Common myeloid progenitor, CD34-positive (primary cell): ENCODE measurements at regions of chr4 and their contacts with region 1.

Region 1: GRCh38 chr4:74675673-74676279 is 118.5 kb downstream of the BTC start:
- DNase-seq: peak; percentile 65 to 77 (median 75)
- H3K4me3 ChIP-seq: no peak overlapping the region
- H3K27ac ChIP-seq: no peak overlapping the region
- H3K4me1 ChIP-seq: peaks cover 0 to 8% (median 4%) of the 10 kb centered on the region in 4 experiments
- H3K27me3 ChIP-seq: no peaks in the 10 kb centered on the region

Region 2: DNA sequence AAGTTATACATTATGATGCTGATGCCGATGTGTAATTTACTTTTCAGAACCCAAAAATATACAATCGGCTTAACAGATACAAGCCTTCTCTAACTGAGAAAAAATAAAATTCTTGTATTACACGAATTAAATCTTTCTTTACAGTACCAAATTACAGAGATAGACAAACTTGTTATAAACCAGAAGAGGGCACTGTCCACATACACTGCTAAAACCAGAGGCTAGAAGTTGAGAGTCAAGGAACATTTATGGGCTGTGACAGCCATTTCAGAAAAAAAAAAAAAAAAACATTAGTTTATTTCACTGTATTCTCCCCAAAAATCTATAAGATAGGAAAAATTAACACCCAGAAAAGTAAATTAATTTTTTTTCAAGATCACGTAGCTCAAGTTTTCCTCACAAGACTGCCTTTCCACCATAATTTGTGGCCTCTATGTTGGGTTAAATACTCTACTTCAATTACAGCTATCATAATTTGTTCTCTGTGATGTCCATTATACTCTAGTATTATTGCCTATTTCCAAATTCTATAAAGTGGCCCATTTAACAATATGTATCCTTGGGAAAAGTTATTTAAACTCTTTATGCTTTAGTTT is 298.8 kb before region 1 on chr4:
- CTCF ChIA-PET with region 1: interaction called, 40 read pairs
- POLR2A ChIA-PET with region 1: no interaction called
- DNase-seq: peak; percentile 65 to 82 (median 81)
- H3K4me3 ChIP-seq: no peak overlapping the region
- H3K27ac ChIP-seq: peak overlapping the region in 1 of 2 experiments; percentile 5
- H3K4me1 ChIP-seq: peaks cover 0 to 24% (median 6%) of the 10 kb centered on the region in 4 experiments
- H3K27me3 ChIP-seq: no peaks in the 10 kb centered on the region

Region 3: DNA sequence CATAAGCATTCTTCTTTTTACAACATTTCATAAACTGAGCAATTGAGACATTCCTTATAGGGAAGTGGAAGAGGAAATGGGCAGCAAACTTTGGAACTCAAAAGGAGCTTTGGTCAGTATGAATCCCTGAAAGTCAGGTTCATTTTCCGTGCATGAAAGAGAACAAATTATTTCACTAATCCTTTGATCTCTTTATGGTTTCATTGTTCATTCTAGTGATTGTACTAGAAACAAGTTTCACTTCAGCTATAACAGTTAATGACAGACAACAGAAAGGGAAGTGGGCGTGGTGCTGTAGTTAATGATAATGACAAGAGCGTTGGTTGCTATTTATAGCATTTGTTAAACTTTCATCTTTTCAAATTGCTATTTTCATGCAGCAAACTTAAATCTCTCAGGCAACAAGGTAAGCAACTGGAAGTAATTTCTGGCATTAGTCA is 132.5 kb before region 1 on chr4:
- CTCF ChIA-PET with region 1: interaction called, 34 read pairs
- POLR2A ChIA-PET with region 1: no interaction called
- DNase-seq: peak; percentile 52 to 91 (median 82)
- H3K4me3 ChIP-seq: peak overlapping the region in 4 of 7 experiments; percentile 2 to 48 (median 28)
- H3K27ac ChIP-seq: peak overlapping the region in 1 of 2 experiments; percentile 67
- H3K4me1 ChIP-seq: peaks cover 10 to 27% (median 11%) of the 10 kb centered on the region in 4 experiments
- H3K27me3 ChIP-seq: no peaks in the 10 kb centered on the region

Region 4: GRCh38 chr4:74623041-74623440 is 52.7 kb before region 1 on chr4:
- CTCF ChIA-PET with region 1: interaction called, 42 read pairs
- POLR2A ChIA-PET with region 1: interaction called, 3 read pairs
- DNase-seq: peak; percentile 68 to 85 (median 80)
- H3K4me3 ChIP-seq: no peak overlapping the region
- H3K27ac ChIP-seq: no peak overlapping the region
- H3K4me1 ChIP-seq: peaks cover 6 to 42% (median 17%) of the 10 kb centered on the region in 4 experiments
- H3K27me3 ChIP-seq: no peaks in the 10 kb centered on the region

Region 5: DNA sequence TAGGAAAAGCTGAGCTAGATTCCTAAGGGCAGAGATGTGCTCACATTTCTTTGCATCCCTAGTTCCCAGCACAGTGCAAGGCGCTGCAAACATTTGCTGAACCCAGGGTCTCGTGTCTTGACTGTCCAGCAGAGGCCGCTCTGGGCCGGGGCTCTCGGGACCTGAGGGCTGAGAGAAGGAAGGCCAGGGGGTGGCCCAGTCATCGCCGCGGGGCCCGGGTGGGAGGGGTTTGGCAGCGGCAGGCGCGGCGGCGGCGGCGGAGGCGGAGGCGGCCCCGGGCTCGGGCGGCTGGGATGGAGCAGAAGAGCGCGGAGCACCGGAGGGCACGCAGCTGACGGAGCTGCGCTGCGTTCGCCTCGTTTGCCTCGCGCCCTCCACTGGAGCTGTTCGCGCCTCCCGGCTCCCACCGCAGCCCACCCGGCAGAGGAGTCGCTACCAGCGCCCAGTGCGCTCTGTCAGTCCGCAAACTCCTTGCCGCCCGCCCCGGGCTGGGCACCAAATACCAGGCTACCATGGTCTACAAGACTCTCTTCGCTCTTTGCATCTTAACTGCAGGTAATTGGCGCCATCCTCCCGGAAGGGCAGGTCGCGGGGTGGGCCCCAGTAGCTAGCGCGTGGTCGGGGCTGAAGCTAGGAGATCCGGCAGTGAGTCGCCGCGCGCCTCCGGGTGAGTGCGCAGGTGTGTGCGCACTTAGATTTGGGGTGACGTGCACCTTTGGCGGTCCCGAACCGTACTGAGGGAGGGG is 257.2 kb after region 1 on chr4 and contains the start of gene PARM1:
- CTCF ChIA-PET with region 1: no interaction called
- POLR2A ChIA-PET with region 1: no interaction called
- DNase-seq: peak; percentile 81 to 85 (median 84)
- H3K4me3 ChIP-seq: peak within 1 kb of the TSS; percentile 30 to 75 (median 65)
- H3K27ac ChIP-seq: no peak within 1 kb of the TSS
- H3K4me1 ChIP-seq: peaks cover 0 to 22% (median 15%) of the 10 kb centered on the region in 4 experiments
- H3K27me3 ChIP-seq: peaks cover 18 to 67% (median 36%) of the 10 kb centered on the region in 5 experiments

Region 6: DNA sequence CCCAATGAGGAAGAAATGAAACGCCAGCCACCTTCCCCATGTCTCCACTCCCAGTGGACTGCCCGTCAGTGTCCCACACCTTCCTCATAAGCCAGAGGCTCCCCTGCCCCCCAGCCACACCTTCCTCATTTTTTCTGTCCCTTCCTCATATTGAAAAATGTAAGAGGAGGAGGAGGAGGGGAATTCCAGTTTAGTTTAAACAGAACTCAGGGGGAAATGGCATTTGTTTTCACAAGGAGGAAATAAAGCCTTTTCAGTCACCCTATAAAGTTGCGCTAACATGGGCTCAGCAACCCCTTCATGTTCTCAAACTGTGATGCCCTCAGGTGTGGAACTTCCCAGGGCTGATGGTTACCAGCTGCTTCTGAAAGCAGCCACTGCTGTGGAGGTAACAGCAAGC is 355.0 kb after region 1 on chr4:
- CTCF ChIA-PET with region 1: no interaction called
- POLR2A ChIA-PET with region 1: no interaction called
- DNase-seq: peak in 2 of 3 donors; percentile 3 to 5
- H3K4me3 ChIP-seq: no peak overlapping the region
- H3K27ac ChIP-seq: no peak overlapping the region
- H3K4me1 ChIP-seq: peaks cover 0 to 10% (median 0%) of the 10 kb centered on the region in 4 experiments
- H3K27me3 ChIP-seq: no peaks in the 10 kb centered on the region